Lower leg skin (tissue), 4 donors: ENCODE measurements at regions of chr1 and their contacts with region 1.

Region 1: GRCh38 chr1:64006276-64007051 is 197.0 kb upstream of the UBE2U start:
- DNase-seq: peak in 1 of 2 donors; percentile 22
- H3K4me3 ChIP-seq: no peak overlapping the region
- CTCF ChIP-seq: no peak
- POLR2A ChIP-seq: no peak

Region 2: GRCh38 chr1:62601457-62601856 is 1405.0 kb before region 1 on chr1:
- intact Hi-C with region 1: loop called (anchors 10 kb)
- DNase-seq: no peak
- H3K4me3 ChIP-seq: no peak overlapping the region
- CTCF ChIP-seq: no peak
- POLR2A ChIP-seq: no peak

Region 3: GRCh38 chr1:64082459-64082858 is 76.0 kb after region 1 on chr1:
- intact Hi-C with region 1: no loop called
- DNase-seq: no peak
- H3K4me3 ChIP-seq: no peak overlapping the region
- CTCF ChIP-seq: no peak
- POLR2A ChIP-seq: no peak

Region 4: GRCh38 chr1:64092851-64093371 is 86.4 kb after region 1 on chr1:
- intact Hi-C with region 1: no loop called
- DNase-seq: no peak
- H3K4me3 ChIP-seq: no peak overlapping the region
- CTCF ChIP-seq: no peak
- POLR2A ChIP-seq: no peak